A673 (cell line): ENCODE measurements at regions of chr1 and their contacts with region 1.

Region 1: GRCh38 chr1:246002725-246003441 is 504.2 kb downstream of the SMYD3 start:
- DNase-seq: peak; percentile 85
- H3K4me3 ChIP-seq: no peak overlapping the region
- H3K27ac ChIP-seq: no peak overlapping the region
- H3K4me1 ChIP-seq: no peaks in the 10 kb centered on the region
- H3K27me3 ChIP-seq: no peaks in the 10 kb centered on the region
- CTCF ChIP-seq: peak; percentile 85

Region 2: DNA sequence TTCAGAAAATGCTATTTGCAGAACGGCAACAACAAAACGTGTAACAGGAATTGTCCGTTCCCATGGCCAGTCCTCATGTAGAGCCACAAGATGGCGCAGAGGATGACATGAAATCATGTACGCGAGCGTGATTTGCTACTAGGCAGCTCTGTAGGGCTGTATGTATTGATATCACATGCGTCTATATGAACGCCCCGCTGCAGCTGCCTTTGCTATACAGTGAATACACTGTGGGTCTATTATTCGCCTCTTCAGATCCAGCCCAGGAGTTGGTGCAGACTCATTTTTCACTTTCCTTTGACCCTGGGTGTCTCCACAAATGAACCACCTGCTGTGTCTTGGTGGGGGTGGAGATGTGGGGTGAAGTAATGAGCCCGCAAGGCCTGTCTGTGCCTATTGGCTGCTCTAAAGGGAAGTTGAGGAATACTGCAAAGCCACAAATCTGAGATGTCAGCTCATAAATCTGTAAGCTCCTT is 486.6 kb before region 1 on chr1:
- CTCF ChIA-PET with region 1: no interaction called
- POLR2A ChIA-PET with region 1: no interaction called
- intact Hi-C with region 1: loop called (anchors 1 kb)
- DNase-seq: peak; percentile 77
- H3K4me3 ChIP-seq: no peak overlapping the region
- H3K27ac ChIP-seq: no peak overlapping the region
- H3K4me1 ChIP-seq: no peaks in the 10 kb centered on the region
- H3K27me3 ChIP-seq: peaks cover 30% of the 10 kb centered on the region
- CTCF ChIP-seq: peak; percentile 73

Region 3: GRCh38 chr1:245888809-245889208 is 114.1 kb before region 1 on chr1:
- CTCF ChIA-PET with region 1: interaction called, 8 read pairs
- POLR2A ChIA-PET with region 1: no interaction called
- intact Hi-C with region 1: loop called (anchors 5 kb)
- DNase-seq: peak; percentile 62
- H3K4me3 ChIP-seq: no peak overlapping the region
- H3K27ac ChIP-seq: no peak overlapping the region
- H3K4me1 ChIP-seq: peaks cover 8% of the 10 kb centered on the region
- H3K27me3 ChIP-seq: no peaks in the 10 kb centered on the region
- CTCF ChIP-seq: peak; percentile 69